CD4-positive, alpha-beta memory T cell (primary cell): ENCODE measurements at regions of chr2 and their contacts with region 1.

Region 1: DNA sequence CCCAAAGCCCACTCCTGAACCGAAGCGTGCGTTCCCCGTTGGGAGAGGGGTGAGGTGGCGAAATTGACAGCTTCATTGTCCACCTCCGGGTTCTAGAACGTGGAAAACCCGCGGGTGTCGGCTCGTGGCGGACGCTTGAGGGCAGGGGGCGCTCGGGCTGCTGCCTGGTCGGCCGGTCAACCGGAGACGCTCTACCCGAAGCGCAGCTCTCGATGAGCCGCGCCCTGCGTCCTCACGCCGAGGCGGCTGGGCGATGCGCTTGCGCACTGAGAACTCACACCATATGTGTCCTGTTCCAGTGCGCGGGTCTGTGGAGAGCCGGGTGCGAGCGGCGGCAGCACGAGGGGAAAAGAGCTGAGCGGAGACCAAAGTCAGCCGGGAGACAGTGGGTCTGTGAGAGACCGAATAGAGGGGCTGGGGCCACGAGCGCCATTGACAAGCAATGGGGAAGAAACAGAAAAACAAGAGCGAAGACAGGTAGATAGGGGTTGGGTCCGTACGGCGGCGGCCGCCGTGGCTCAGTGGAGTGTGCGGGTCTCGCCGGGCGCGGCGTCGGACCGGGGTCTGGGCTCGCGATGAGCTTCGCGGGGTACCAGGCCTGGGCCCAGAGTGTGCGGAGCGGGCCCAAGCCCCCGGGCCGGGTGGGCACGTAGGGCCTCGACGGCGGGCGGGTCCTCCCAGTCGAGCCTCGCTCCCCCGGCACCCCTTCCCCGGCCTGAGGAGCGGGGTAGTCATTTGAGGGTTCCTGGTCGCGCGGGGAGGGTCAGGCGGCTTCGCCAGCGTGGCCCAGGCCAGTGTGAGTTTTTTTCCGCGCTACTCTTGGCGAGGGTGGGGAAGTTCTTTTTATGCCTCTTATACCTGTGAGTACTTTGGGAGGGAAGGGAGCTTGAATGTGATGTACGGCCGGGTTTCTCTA is at the start of gene EIF5B:
- DNase-seq: peak; percentile 87 to 90 (median 87)
- H3K4me3 ChIP-seq: peak within 1 kb of the TSS; percentile 73 to 86
- H3K4me3 Mint-ChIP-seq: no peak within 1 kb of the TSS
- H3K27ac ChIP-seq: peak within 1 kb of the TSS; percentile 70
- H3K27ac Mint-ChIP-seq: no peak within 1 kb of the TSS
- H3K4me1 ChIP-seq: peaks cover 51% of the 10 kb centered on the region
- H3K4me1 Mint-ChIP-seq: peaks cover 23 to 48% (median 26%) of the 10 kb centered on the region in 4 donors
- H3K27me3 ChIP-seq: no peaks in the 10 kb centered on the region
- H3K27me3 Mint-ChIP-seq: no peaks in the 10 kb centered on the region
- total RNA-seq, gene EIF5B: 36.2 to 44.2 TPM

Region 2: GRCh38 chr2:97645695-97646629 is 1691.4 kb before region 1 on chr2 and contains the start of gene COX5B:
- CTCF ChIA-PET with region 1: no interaction called
- POLR2A ChIA-PET with region 1: no interaction called
- intact Hi-C with region 1: loop called (anchors 10 kb)
- DNase-seq: peak; percentile 97 to 99 (median 98)
- H3K4me3 ChIP-seq: peak within 1 kb of the TSS; percentile 84 to 87
- H3K4me3 Mint-ChIP-seq: peak within 1 kb of the TSS; percentile 91 to 98 (median 96)
- H3K27ac ChIP-seq: peak within 1 kb of the TSS; percentile 88
- H3K27ac Mint-ChIP-seq: peak within 1 kb of the TSS; percentile 92 to 99 (median 98)
- H3K4me1 ChIP-seq: peaks cover 20% of the 10 kb centered on the region
- H3K4me1 Mint-ChIP-seq: peaks cover 18 to 33% (median 27%) of the 10 kb centered on the region in 4 donors
- H3K27me3 ChIP-seq: no peaks in the 10 kb centered on the region
- H3K27me3 Mint-ChIP-seq: no peaks in the 10 kb centered on the region
- total RNA-seq, gene COX5B: 118 to 120 TPM

Region 3: DNA sequence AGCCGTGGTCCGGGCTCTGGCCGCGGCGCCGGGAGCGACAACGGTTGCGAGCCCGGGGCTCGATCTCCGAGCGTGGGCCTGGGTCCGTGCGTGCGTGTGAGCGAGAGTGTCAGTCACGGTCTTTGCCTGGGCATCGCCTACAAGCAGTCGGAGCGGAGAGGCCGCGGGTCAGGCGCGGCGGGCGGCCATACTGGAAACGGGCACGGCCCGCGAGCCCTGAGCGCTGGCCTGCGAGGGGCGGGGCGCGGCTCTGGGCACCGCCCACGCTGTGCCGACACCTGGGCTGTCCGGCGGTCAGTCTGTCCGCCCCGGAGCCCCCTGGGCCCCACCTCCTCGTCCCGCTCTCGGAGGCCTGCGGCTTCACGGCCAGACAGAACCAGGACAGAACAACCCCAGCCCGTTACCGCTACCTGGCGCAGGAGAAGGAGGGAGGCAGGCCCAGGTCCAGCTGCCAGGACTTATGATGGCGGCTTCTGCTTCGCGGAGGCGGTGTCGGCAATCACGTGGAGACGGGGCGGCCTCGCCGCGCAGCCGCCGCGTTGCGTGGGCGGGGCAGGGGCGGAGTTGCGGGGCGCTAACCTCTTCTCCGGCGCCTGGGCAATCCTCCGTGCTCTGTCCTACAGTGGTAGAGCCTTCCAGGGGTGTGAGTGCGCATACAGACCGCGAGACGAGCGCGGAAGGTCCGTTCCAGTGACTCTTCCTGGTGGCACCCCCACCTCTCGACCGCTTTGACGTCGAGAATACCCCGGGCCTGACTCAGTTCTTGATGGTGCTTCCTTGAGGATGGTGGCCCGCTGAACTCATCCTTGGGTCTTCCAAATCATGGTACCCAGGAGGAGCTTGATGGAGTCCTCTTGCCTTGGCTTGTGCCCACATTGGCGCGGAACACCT is 1341.4 kb before region 1 on chr2 and contains the start of gene TMEM131:
- CTCF ChIA-PET with region 1: no interaction called
- POLR2A ChIA-PET with region 1: no interaction called
- intact Hi-C with region 1: loop called (anchors 2 kb)
- DNase-seq: peak; percentile 93 to 97 (median 95)
- H3K4me3 ChIP-seq: peak within 1 kb of the TSS; percentile 69 to 95
- H3K4me3 Mint-ChIP-seq: peak within 1 kb of the TSS; percentile 90 to 100 (median 97)
- H3K27ac ChIP-seq: peak within 1 kb of the TSS; percentile 89
- H3K27ac Mint-ChIP-seq: peak within 1 kb of the TSS; percentile 84 to 98 (median 94)
- H3K4me1 ChIP-seq: peaks cover 37% of the 10 kb centered on the region
- H3K4me1 Mint-ChIP-seq: peaks cover 28 to 47% (median 36%) of the 10 kb centered on the region in 4 donors
- H3K27me3 ChIP-seq: no peaks in the 10 kb centered on the region
- H3K27me3 Mint-ChIP-seq: peaks cover 0 to 2% of the 10 kb centered on the region in 2 donors
- total RNA-seq, gene TMEM131: 47.5 to 47.6 TPM

Region 4: DNA sequence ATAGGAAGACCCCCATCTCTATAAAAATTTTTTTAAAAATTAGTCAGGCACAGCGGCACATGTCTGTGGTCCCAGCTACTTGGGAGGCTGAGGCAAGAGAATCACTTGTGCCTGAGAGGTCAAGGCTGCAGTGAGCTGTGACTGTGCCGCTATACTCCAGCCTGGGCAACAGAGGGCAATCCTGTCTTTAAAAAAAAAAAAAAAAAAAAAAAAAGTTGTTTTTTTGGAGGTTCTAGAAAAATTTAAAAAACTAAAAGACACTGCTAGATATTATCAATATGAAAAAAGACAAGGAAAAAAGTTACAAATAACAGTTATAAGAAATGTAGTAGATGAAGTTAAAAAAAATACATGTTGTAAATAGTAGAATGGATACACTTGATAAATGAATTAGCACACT is 251.9 kb before region 1 on chr2:
- CTCF ChIA-PET with region 1: no interaction called
- POLR2A ChIA-PET with region 1: no interaction called
- intact Hi-C with region 1: loop called (anchors 5 kb)
- DNase-seq: peak in 3 of 5 donors; percentile 8 to 18 (median 14)
- H3K4me3 ChIP-seq: no peak overlapping the region
- H3K4me3 Mint-ChIP-seq: no peak overlapping the region
- H3K27ac ChIP-seq: no peak overlapping the region
- H3K27ac Mint-ChIP-seq: peak overlapping the region in 1 of 7 donors; percentile 39
- H3K4me1 ChIP-seq: peaks cover 8% of the 10 kb centered on the region
- H3K4me1 Mint-ChIP-seq: peaks cover 4 to 5% (median 5%) of the 10 kb centered on the region in 4 donors
- H3K27me3 ChIP-seq: no peaks in the 10 kb centered on the region
- H3K27me3 Mint-ChIP-seq: peaks cover 14 to 18% of the 10 kb centered on the region in 2 donors

Region 5: GRCh38 chr2:99154643-99155536 is 182.5 kb before region 1 on chr2 and contains the starts of genes LIPT1 and TSGA10:
- CTCF ChIA-PET with region 1: interaction called, 8 read pairs
- POLR2A ChIA-PET with region 1: interaction called, 25 read pairs
- intact Hi-C with region 1: loop called (anchors 1 kb)
- DNase-seq: peak; percentile 90 to 92 (median 91)
- H3K4me3 ChIP-seq: peak within 1 kb of the TSS; percentile 78 to 89
- H3K4me3 Mint-ChIP-seq: peak within 1 kb of the TSS in 3 of 8 donors; percentile 91 to 99 (median 96)
- H3K27ac ChIP-seq: peak within 1 kb of the TSS; percentile 97
- H3K27ac Mint-ChIP-seq: peak within 1 kb of the TSS in 1 of 7 donors; percentile 100
- H3K4me1 ChIP-seq: peaks cover 25% of the 10 kb centered on the region
- H3K4me1 Mint-ChIP-seq: peaks cover 10 to 43% (median 39%) of the 10 kb centered on the region in 4 donors
- H3K27me3 ChIP-seq: no peaks in the 10 kb centered on the region
- H3K27me3 Mint-ChIP-seq: no peaks in the 10 kb centered on the region
- total RNA-seq, gene LIPT1: 23.4 to 24.4 TPM
- total RNA-seq, gene TSGA10: 20.7 to 22.6 TPM

Region 6: GRCh38 chr2:99285526-99285925 is 51.8 kb before region 1 on chr2:
- CTCF ChIA-PET with region 1: no interaction called
- POLR2A ChIA-PET with region 1: no interaction called
- intact Hi-C with region 1: no loop called
- DNase-seq: no peak
- H3K4me3 ChIP-seq: no peak overlapping the region
- H3K4me3 Mint-ChIP-seq: no peak overlapping the region
- H3K27ac ChIP-seq: no peak overlapping the region
- H3K27ac Mint-ChIP-seq: no peak overlapping the region
- H3K4me1 ChIP-seq: no peaks in the 10 kb centered on the region
- H3K4me1 Mint-ChIP-seq: no peaks in the 10 kb centered on the region
- H3K27me3 ChIP-seq: no peaks in the 10 kb centered on the region
- H3K27me3 Mint-ChIP-seq: no peaks in the 10 kb centered on the region

Region 7: GRCh38 chr2:99348173-99348572 is 10.8 kb after region 1 on chr2:
- CTCF ChIA-PET with region 1: interaction called, 8 read pairs
- POLR2A ChIA-PET with region 1: interaction called, 12 read pairs
- intact Hi-C with region 1: no loop called
- DNase-seq: peak in 1 of 5 donors; percentile 8
- H3K4me3 ChIP-seq: no peak overlapping the region
- H3K4me3 Mint-ChIP-seq: peak overlapping the region in 3 of 8 donors; percentile 11 to 52 (median 38)
- H3K27ac ChIP-seq: no peak overlapping the region
- H3K27ac Mint-ChIP-seq: peak overlapping the region; percentile 4 to 84 (median 57)
- H3K4me1 ChIP-seq: peaks cover 45% of the 10 kb centered on the region
- H3K4me1 Mint-ChIP-seq: peaks cover 38 to 73% (median 51%) of the 10 kb centered on the region in 4 donors
- H3K27me3 ChIP-seq: no peaks in the 10 kb centered on the region
- H3K27me3 Mint-ChIP-seq: no peaks in the 10 kb centered on the region

Region 8: GRCh38 chr2:100562732-100563720 is 1225.7 kb after region 1 on chr2 and contains the start of gene PDCL3:
- CTCF ChIA-PET with region 1: no interaction called
- POLR2A ChIA-PET with region 1: interaction called, 7 read pairs
- intact Hi-C with region 1: loop called (anchors 10 kb)
- DNase-seq: peak; percentile 94 to 98 (median 96)
- H3K4me3 ChIP-seq: peak within 1 kb of the TSS; percentile 84 to 89
- H3K4me3 Mint-ChIP-seq: peak within 1 kb of the TSS; percentile 93 to 100 (median 96)
- H3K27ac ChIP-seq: peak within 1 kb of the TSS; percentile 74
- H3K27ac Mint-ChIP-seq: peak within 1 kb of the TSS; percentile 98 to 100 (median 99)
- H3K4me1 ChIP-seq: peaks cover 35% of the 10 kb centered on the region
- H3K4me1 Mint-ChIP-seq: peaks cover 26 to 54% (median 37%) of the 10 kb centered on the region in 4 donors
- H3K27me3 ChIP-seq: no peaks in the 10 kb centered on the region
- H3K27me3 Mint-ChIP-seq: no peaks in the 10 kb centered on the region
- total RNA-seq, gene PDCL3: 16.6 to 17.8 TPM